Activated T-helper 2 cell treated with anti-CD3 and anti-CD28 coated beads, Interferon-gamma antibody, Interleukin-2, Interleukin-4, amounts not matched to agents 10 μg/mL and 5 μg/mL and 100 μg/mL, durations not matched to agents 14 hours and 24 hours and 36 hours (primary cell): ENCODE measurements at regions of chr13 and their contacts with region 1.

Region 1: GRCh38 chr13:43023289-43023951 is at the start of gene DNAJC15:
- DNase-seq: peak; percentile 77
- H3K4me3 Mint-ChIP-seq: peak within 1 kb of the TSS; percentile 91
- H3K27ac Mint-ChIP-seq: peak within 1 kb of the TSS; percentile 81
- H3K4me1 Mint-ChIP-seq: peaks cover 16% of the 10 kb centered on the region
- H3K27me3 Mint-ChIP-seq: no peaks in the 10 kb centered on the region
- total RNA-seq, gene DNAJC15: 18.0 and 18.8 TPM in 2 replicates

Region 2: DNA sequence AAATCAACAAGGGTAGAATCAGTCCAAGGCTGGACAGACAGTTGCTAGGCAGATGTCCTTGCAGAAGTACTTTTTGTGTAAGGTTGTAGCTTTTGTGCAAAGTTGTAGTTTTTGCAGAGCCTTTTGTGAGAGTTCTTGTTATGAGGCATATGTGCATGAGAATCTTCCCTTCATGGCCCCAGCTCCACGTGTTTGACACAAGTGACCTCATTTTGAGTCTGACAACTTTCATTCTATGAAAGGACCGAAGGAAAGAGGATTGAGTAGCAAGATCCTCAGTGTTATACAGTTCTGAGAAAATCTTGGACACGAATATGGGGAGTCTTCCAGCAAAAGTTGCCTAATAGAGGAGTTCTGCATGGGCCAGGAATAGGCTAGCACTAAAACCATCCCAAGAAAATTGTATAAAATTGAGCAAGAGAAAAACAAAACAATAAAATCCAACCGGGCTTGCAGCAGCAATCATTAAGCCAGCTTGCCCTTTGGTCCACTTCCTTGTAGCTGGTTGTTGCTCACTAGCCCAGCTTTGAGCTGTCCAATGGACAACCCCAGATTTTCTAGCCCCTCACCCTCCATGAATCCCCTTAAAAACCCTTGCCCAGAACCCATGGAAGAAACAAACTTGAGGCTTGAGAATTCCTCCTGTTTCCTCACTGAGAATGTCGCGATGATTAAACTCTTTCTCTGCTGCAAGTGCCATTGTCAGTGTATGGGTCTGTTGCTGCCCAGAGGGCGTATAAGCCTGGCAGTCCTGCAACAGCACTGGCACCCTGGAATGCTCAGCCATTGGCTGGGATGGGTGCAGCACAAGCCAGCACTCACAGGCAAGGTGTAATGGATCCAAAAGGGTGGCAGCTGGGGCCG is 37.9 kb before region 1 on chr13:
- intact Hi-C with region 1: loop called (anchors 5 kb)
- DNase-seq: no peak
- H3K4me3 Mint-ChIP-seq: no peak overlapping the region
- H3K27ac Mint-ChIP-seq: no peak overlapping the region
- H3K4me1 Mint-ChIP-seq: peaks cover 30% of the 10 kb centered on the region
- H3K27me3 Mint-ChIP-seq: no peaks in the 10 kb centered on the region

Region 3: GRCh38 chr13:43041369-43041921 is 18.0 kb after region 1 on chr13:
- intact Hi-C with region 1: loop called (anchors 1 kb)
- DNase-seq: no peak
- H3K4me3 Mint-ChIP-seq: no peak overlapping the region
- H3K27ac Mint-ChIP-seq: no peak overlapping the region
- H3K4me1 Mint-ChIP-seq: peaks cover 40% of the 10 kb centered on the region
- H3K27me3 Mint-ChIP-seq: no peaks in the 10 kb centered on the region

Region 4: DNA sequence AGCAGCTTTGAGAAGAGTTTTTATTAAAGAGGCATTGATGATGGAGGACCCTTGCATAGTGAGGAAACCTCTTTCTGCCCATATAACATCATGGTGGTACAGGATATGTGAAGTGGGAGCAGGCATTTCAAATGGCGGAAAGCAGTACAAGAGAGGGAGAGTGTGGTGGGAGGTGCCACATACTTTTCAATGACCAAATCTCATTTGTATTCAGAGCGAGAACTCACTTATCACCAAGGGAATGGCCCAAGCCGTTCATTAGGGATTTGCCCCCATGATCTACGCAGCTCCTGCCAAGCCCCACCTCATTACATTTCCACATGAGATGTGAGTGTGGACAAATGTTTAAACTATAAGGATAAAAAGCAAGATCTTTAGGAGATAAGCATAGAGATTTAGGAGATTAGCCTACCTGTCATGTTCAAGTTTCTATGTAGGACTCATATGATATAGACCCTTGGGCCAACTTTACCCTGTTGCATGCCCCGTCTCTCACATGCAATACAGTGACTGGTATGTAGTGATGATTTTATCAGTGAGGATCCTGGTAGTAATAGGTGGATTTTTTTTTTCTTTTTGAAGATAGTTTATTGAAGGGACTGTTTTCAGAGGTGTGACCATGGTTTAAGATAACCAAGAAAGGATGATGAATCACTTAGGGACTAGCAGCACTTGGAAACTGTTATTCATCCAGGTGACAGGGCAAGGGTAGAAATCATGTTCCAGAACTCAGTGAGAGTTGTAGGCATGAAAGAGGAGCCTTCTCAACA is 38.3 kb after region 1 on chr13:
- intact Hi-C with region 1: loop called (anchors 5 kb)
- DNase-seq: no peak
- H3K4me3 Mint-ChIP-seq: no peak overlapping the region
- H3K27ac Mint-ChIP-seq: peak overlapping the region; percentile 54
- H3K4me1 Mint-ChIP-seq: peaks cover 45% of the 10 kb centered on the region
- H3K27me3 Mint-ChIP-seq: no peaks in the 10 kb centered on the region

Region 5: DNA sequence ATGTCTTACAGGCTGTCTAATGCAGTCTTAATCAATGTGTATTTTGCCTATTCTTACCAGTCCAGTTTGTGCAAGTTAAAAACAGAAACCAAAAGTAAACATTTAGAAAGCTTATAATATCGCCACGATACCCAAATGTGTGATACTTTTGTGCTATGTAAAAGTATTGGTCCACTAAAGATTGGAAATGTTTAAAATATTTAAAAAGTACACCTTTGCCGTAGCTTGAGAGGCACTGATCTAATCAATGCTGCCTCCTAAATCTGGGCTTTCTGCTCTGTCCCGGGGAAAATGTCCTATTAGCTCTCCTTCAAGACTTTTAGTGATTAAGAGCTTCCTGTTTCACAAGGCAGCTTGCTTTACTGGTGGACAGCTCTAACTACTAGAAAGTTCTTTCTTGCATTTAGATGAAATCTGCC is 64.7 kb after region 1 on chr13:
- intact Hi-C with region 1: no loop called
- DNase-seq: no peak
- H3K4me3 Mint-ChIP-seq: no peak overlapping the region
- H3K27ac Mint-ChIP-seq: peak overlapping the region; percentile 22
- H3K4me1 Mint-ChIP-seq: peaks cover 11% of the 10 kb centered on the region
- H3K27me3 Mint-ChIP-seq: no peaks in the 10 kb centered on the region